Lower lobe of right lung (tissue), 2 donors: ENCODE measurements at regions of chr10 and their contacts with region 1.

Region 1: DNA sequence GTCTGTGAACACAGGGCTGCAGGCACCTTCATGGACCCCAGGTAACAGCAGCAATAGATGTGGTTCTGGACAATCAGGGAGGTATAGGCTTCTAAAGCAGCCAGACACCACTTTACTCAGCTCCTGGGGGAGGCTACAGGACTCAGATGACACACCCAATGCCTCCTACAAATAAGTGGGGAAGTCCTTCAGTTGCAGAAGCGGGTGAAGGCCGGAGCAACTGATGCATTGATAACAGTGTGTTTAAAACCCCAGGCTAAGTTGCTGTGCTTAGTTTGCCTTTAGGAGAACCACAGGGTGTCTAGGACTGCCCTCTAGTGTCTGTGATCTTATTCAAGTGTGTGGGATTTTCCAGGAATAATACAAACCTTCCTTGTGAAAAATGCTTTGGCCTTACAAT is 5.9 kb upstream of the ITGA8 start:
- DNase-seq: no peak
- ATAC-seq: peak; percentile 58 to 61
- H3K4me3 ChIP-seq: no peak overlapping the region
- H3K27ac ChIP-seq: no peak overlapping the region
- H3K4me1 ChIP-seq: no peaks in the 10 kb centered on the region
- H3K27me3 ChIP-seq: peaks cover 4% of the 10 kb centered on the region
- CTCF ChIP-seq: peak; percentile 54

Region 2: GRCh38 chr10:15433850-15434537 is 291.6 kb before region 1 on chr10:
- intact Hi-C with region 1: loop called (anchors 10 kb)
- DNase-seq: no peak
- ATAC-seq: peak in 1 of 2 donors; percentile 65
- H3K4me3 ChIP-seq: peak overlapping the region; percentile 34
- H3K27ac ChIP-seq: no peak overlapping the region
- H3K4me1 ChIP-seq: no peaks in the 10 kb centered on the region
- H3K27me3 ChIP-seq: no peaks in the 10 kb centered on the region
- CTCF ChIP-seq: peak; percentile 60

Region 3: DNA sequence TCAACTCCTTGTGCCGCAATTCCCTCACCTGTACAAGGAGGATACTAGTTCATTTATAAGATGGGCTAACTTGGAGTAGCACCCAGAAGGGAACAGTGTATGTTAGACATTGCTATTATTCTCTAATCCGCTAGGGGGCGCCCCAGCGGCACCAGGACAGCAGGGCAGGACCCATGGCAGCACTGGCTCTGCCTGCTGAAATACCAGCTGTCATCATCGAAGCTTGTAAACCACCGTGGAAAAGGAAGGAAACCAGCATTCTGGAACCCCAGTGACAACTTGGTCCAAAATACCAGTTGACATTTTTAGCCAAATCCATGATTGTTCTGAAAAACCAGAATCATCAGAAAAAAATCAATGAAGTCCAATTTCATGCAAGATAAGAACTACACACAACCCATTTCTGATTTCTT is 140.3 kb before region 1 on chr10:
- intact Hi-C with region 1: loop called (anchors 10 kb)
- DNase-seq: peak; percentile 55
- ATAC-seq: peak; percentile 61 to 72
- H3K4me3 ChIP-seq: no peak overlapping the region
- H3K27ac ChIP-seq: no peak overlapping the region
- H3K4me1 ChIP-seq: peaks cover 19% of the 10 kb centered on the region
- H3K27me3 ChIP-seq: no peaks in the 10 kb centered on the region
- CTCF ChIP-seq: peak; percentile 69